ENCODE measurements at regions of chr12 and their contacts with region 1.

Region 1: DNA sequence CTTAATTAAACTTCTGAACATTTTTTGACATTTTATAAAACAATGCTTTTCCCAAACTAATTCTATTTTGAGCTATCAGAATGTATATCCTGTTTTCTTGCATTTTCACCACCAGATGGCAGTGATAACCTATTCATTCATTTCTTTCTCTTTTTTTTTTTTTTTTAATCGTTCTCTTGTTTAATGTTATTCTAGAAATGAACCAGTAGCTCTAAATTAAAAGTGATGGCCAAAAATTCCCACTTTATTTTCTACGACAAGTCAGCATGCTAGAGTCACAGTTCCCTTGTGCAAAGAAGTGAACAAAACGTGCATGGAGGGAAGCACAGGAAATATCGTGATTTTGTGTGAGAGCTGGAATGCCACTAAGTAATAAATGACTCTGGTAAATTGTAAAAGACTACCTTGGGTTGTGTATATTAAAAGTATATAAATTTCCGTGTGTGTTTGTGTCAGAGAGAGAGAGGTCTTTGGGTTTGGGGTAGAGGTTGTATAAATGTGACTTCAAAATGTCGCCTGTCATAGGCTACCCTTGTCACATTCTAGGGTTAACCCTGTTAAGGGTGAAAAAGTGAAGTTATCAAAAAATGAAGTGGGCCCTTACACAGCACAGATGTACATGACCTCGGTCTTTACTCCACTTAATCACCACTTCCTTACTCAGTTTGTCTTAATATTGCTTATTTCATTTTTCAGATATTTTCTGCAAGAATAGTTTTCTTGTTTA is 40.4 kb upstream of the LDHB start:
- DNase-seq: peak in 4 of 5 donors; percentile 43 to 46 (median 44)
- H3K4me3 ChIP-seq: no peak overlapping the region
- H3K4me3 Mint-ChIP-seq: peak overlapping the region in 6 of 8 donors; percentile 19 to 68 (median 27)
- H3K27ac ChIP-seq: no peak overlapping the region
- H3K27ac Mint-ChIP-seq: no peak overlapping the region
- H3K4me1 ChIP-seq: peaks cover 11% of the 10 kb centered on the region
- H3K4me1 Mint-ChIP-seq: peaks cover 0 to 16% (median 10%) of the 10 kb centered on the region in 4 donors
- H3K27me3 ChIP-seq: no peaks in the 10 kb centered on the region
- H3K27me3 Mint-ChIP-seq: no peaks in the 10 kb centered on the region

Region 2: DNA sequence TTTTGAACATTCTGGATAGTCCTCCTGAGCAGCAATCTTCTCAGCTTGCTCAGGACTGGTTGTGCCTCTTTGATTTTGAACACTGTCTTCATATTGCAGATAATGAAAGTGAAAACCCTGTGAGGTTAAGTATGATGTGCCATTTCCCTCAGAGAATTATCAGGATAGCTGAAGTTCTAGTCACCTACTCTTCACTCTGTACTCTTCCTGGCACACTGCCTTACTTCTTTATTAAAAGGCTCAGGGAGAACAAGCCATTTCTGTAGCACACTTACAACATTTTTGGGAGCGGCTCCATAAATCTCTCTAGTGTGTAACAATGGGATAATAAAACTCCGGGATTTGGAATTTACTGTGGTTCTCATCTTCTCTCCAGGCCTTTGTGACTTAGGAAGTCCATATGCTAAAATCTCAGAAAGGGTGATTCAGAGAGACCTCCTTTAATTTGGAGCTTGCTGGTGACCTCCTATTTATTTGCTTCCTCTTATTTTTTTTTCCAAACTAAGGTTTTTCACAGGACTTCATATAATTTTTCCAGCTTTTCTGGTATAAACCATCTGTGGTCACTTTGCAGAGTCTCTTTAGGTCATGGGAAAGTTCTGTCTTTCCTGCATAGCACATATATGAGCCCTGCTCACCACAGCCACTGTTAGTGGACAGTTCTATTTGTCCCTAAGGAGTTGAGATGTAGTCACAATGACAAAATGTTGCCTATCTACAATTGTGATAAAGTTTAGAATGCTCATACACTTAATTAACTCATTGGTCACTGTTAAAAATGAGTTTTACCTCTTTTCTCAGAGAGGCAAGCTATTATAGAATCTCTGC is 13.1 kb after region 1 on chr12:
- CTCF ChIA-PET with region 1: interaction called, 23 read pairs
- POLR2A ChIA-PET with region 1: no interaction called
- intact Hi-C with region 1: no loop called
- DNase-seq: no peak
- H3K4me3 ChIP-seq: no peak overlapping the region
- H3K4me3 Mint-ChIP-seq: peak overlapping the region in 1 of 8 donors; percentile 31
- H3K27ac ChIP-seq: no peak overlapping the region
- H3K27ac Mint-ChIP-seq: no peak overlapping the region
- H3K4me1 ChIP-seq: no peaks in the 10 kb centered on the region
- H3K4me1 Mint-ChIP-seq: peaks cover 0 to 3% (median 0%) of the 10 kb centered on the region in 4 donors
- H3K27me3 ChIP-seq: no peaks in the 10 kb centered on the region
- H3K27me3 Mint-ChIP-seq: peaks cover 7 to 13% of the 10 kb centered on the region in 2 donors

Region 3: GRCh38 chr12:21989819-21990412 is 291.8 kb after region 1 on chr12:
- CTCF ChIA-PET with region 1: interaction called, 46 read pairs
- POLR2A ChIA-PET with region 1: no interaction called
- intact Hi-C with region 1: loop called (anchors 1 kb)
- DNase-seq: peak in 1 of 5 donors; percentile 4
- H3K4me3 ChIP-seq: no peak overlapping the region
- H3K4me3 Mint-ChIP-seq: no peak overlapping the region
- H3K27ac ChIP-seq: no peak overlapping the region
- H3K27ac Mint-ChIP-seq: no peak overlapping the region
- H3K4me1 ChIP-seq: no peaks in the 10 kb centered on the region
- H3K4me1 Mint-ChIP-seq: peaks cover 0 to 9% (median 7%) of the 10 kb centered on the region in 4 donors
- H3K27me3 ChIP-seq: no peaks in the 10 kb centered on the region
- H3K27me3 Mint-ChIP-seq: peaks cover 4 to 7% of the 10 kb centered on the region in 2 donors

Region 4: GRCh38 chr12:22173177-22173576 is 475.1 kb after region 1 on chr12:
- CTCF ChIA-PET with region 1: interaction called, 5 read pairs
- POLR2A ChIA-PET with region 1: no interaction called
- intact Hi-C with region 1: loop called (anchors 5 kb)
- DNase-seq: no peak
- H3K4me3 ChIP-seq: no peak overlapping the region
- H3K4me3 Mint-ChIP-seq: no peak overlapping the region
- H3K27ac ChIP-seq: no peak overlapping the region
- H3K27ac Mint-ChIP-seq: no peak overlapping the region
- H3K4me1 ChIP-seq: no peaks in the 10 kb centered on the region
- H3K4me1 Mint-ChIP-seq: peaks cover 4 to 5% (median 5%) of the 10 kb centered on the region in 4 donors
- H3K27me3 ChIP-seq: no peaks in the 10 kb centered on the region
- H3K27me3 Mint-ChIP-seq: peaks cover 0 to 2% of the 10 kb centered on the region in 2 donors

Region 5: GRCh38 chr12:22624870-22625761 is 927.0 kb after region 1 on chr12 and contains the start of gene ETNK1:
- CTCF ChIA-PET with region 1: no interaction called
- POLR2A ChIA-PET with region 1: no interaction called
- intact Hi-C with region 1: loop called (anchors 10 kb)
- DNase-seq: peak; percentile 76 to 85 (median 81)
- H3K4me3 ChIP-seq: peak within 1 kb of the TSS; percentile 80 to 93
- H3K4me3 Mint-ChIP-seq: peak within 1 kb of the TSS; percentile 92 to 99 (median 93)
- H3K27ac ChIP-seq: peak within 1 kb of the TSS; percentile 80
- H3K27ac Mint-ChIP-seq: peak within 1 kb of the TSS; percentile 93 to 99 (median 98)
- H3K4me1 ChIP-seq: peaks cover 36% of the 10 kb centered on the region
- H3K4me1 Mint-ChIP-seq: peaks cover 25 to 50% (median 38%) of the 10 kb centered on the region in 4 donors
- H3K27me3 ChIP-seq: no peaks in the 10 kb centered on the region
- H3K27me3 Mint-ChIP-seq: peaks cover 0 to 3% of the 10 kb centered on the region in 2 donors
- total RNA-seq, gene ETNK1: 81.1 to 88.1 TPM

Measured in CD4-positive, alpha-beta memory T cell (primary cell).